GM23248 (cell line): ENCODE measurements at regions of chr1 and their contacts with region 1.

Region 1: DNA sequence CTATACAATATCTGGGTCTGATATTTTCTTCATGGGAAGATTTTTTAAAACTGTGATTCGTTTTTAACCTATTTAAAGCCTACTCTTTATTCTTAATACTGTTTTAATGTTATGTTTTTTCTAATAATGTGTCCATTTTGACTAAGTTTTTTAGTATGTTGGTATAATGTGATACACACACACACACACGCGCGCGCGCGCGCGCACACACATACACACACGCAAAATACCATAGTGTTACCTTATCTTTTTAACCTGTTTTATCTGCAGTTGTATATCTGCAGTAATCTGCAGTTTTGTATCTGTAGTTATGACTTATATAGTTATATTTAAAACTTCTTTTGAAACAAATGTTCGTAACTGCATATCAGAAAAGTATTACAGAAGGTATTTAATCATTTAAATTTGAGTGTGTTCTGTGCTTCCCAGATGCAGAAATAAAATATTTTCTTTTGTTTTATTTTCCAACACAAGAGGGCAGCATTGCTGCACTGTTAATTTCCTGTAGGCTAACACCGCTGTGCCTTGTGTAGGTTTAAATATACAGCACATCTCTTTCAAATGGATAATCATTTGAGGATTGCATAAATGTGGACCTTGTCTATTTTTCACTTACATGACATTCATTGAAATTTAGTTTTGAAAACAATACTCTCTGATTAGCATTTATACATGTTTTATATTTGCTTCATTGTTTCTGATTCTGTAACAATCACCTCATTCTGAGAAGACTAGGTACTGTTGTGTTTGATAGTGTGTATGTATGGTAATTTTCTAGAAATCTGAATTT is 166.1 kb downstream of the PDE4B start:
- DNase-seq: peak; percentile 68
- H3K4me3 ChIP-seq: no peak overlapping the region
- H3K27ac ChIP-seq: no peak overlapping the region
- H3K4me1 ChIP-seq: no peaks in the 10 kb centered on the region
- H3K27me3 ChIP-seq: no peaks in the 10 kb centered on the region

Region 2: DNA sequence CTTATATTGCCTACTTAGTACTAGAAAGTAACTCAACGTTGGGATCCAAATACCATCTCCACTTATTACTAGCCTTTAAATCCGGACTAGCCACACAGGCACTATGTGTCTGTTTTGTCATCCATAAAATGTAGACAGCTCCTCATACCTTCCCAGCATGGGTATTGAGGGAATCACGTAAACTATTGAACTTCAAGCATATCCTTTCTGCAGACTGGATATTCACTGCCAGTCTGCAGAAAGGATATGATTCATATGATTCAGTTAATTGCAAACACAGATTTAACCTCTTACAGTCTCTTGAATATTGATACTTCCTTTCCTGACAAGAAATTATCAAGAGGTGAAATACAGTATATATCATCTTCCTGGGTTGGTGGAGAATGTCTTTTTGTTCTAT is 352.3 kb before region 1 on chr1:
- in situ Hi-C with region 1: no loop called
- DNase-seq: no peak
- H3K4me3 ChIP-seq: no peak overlapping the region
- H3K27ac ChIP-seq: no peak overlapping the region
- H3K4me1 ChIP-seq: peaks cover 4% of the 10 kb centered on the region; the same call in 1 of the 2 replicates
- H3K27me3 ChIP-seq: no peaks in the 10 kb centered on the region

Region 3: GRCh38 chr1:66446261-66447001 is 487.7 kb after region 1 on chr1:
- in situ Hi-C with region 1: loop called (anchors 10 kb)
- DNase-seq: peak; percentile 80
- H3K4me3 ChIP-seq: no peak overlapping the region
- H3K27ac ChIP-seq: 0 out of 2 replicates have a peak overlapping the region, but pooled peaks have one; percentile 14
- H3K4me1 ChIP-seq: peaks cover 33% of the 10 kb centered on the region
- H3K27me3 ChIP-seq: no peaks in the 10 kb centered on the region